Activated CD4-positive, alpha-beta memory T cell treated with anti-CD3 and anti-CD28 coated beads, Interleukin-2, amount 10 ng/mL, durations not matched to agents 7 days and 5 days (primary cell): ENCODE measurements at regions of chr6 and their contacts with region 1.

Region 1: GRCh38 chr6:149140137-149140909 is 177.2 kb upstream of the TAB2 start:
- DNase-seq: peak; percentile 88
- H3K4me3 Mint-ChIP-seq: peak overlapping the region; percentile 77
- H3K27ac Mint-ChIP-seq: peak overlapping the region; percentile 96
- H3K4me1 Mint-ChIP-seq: peaks cover 63% of the 10 kb centered on the region
- H3K27me3 Mint-ChIP-seq: no peaks in the 10 kb centered on the region

Region 2: DNA sequence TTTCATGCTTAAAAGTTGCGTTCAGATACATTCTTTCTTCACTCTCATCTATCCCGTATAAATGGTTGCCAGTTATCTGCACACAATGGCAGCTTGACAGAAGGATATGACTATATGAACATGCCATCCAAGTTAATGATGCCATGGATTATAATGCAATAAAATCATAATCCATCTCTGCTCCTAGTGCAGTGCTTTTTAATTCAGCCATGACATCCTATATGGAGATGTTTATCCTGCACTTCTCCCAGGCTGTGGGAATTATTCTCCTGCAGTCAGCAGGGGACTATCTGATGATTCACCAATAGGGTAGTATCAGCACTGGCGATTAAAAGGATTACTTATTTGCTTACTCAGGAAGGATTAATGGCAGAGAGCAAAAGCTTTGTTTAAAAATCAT is 1358.0 kb before region 1 on chr6:
- CTCF ChIA-PET with region 1: no interaction called
- POLR2A ChIA-PET with region 1: no interaction called
- DNase-seq: no peak
- H3K4me3 Mint-ChIP-seq: no peak overlapping the region
- H3K27ac Mint-ChIP-seq: no peak overlapping the region
- H3K4me1 Mint-ChIP-seq: no peaks in the 10 kb centered on the region
- H3K27me3 Mint-ChIP-seq: no peaks in the 10 kb centered on the region

Region 3: DNA sequence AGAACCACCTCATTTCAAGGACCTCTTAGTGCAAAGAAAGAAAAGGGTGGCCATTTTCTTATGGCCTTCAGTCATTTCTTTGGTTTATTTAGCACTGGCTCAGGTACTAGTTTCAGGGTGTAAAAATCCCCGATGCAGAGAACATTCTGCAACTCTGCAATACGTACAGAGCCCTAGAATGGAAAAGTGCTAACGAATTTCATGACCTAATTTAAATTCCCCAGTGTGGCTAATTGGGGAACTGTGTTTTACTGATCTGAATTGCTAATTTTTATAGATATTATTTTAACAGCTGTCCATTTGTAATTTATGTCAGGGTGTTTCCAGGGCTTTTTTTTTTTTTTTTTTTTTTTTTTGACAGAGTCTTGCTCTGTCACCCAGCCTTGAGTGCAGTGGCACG is 232.8 kb before region 1 on chr6:
- CTCF ChIA-PET with region 1: no interaction called
- POLR2A ChIA-PET with region 1: no interaction called
- DNase-seq: no peak
- H3K4me3 Mint-ChIP-seq: no peak overlapping the region
- H3K27ac Mint-ChIP-seq: no peak overlapping the region
- H3K4me1 Mint-ChIP-seq: no peaks in the 10 kb centered on the region
- H3K27me3 Mint-ChIP-seq: no peaks in the 10 kb centered on the region

Region 4: DNA sequence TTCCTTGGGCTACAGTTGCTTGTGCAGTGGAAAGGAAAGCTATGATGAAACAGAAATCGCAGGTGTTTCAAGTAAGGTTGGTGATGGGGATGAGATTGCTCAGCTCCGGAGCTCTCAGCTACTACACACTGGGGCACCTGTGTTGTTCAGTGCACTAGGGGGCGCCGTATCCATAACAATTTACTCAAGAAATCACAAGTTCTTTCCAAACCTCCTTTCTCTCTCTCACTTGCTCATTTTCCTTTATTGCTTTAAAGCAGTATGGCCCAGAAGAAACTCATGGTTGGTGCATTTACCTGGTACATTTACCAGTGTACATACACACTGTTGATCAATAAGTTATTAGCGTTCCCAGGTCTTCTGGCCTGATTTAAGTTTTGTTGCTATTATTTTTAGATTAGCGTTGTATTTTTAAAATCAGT is 58.0 kb before region 1 on chr6:
- CTCF ChIA-PET with region 1: interaction called, 3 read pairs
- POLR2A ChIA-PET with region 1: interaction called, 65 read pairs
- DNase-seq: peak; percentile 91
- H3K4me3 Mint-ChIP-seq: peak overlapping the region; percentile 50
- H3K27ac Mint-ChIP-seq: peak overlapping the region; percentile 96
- H3K4me1 Mint-ChIP-seq: peaks cover 87% of the 10 kb centered on the region
- H3K27me3 Mint-ChIP-seq: no peaks in the 10 kb centered on the region